RWPE1 (cell line): ENCODE measurements at regions of chr12 and their contacts with region 1.

Region 1: DNA sequence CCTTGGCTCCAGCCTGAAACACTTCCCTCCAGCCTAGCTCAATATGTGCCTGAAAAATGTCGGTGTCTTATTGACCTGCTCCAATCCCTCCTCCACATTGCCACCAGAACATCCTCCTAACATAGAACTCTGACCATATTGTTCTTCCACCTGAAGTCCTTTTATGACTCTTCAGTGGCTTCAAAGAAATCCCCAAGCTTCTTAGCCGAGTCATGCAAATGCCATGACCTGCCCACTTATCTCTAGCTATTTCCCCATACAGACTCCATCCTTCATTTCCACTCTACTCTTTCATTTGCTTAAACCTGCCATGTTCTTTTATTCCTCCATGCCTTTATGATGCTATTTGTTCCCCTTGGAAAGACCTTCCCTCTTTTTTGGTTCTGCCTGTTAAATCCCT is 568.6 kb downstream of the ETNK1 start:
- DNase-seq: no peak
- H3K27ac ChIP-seq: no peak overlapping the region
- CTCF ChIP-seq: no peak

Region 2: DNA sequence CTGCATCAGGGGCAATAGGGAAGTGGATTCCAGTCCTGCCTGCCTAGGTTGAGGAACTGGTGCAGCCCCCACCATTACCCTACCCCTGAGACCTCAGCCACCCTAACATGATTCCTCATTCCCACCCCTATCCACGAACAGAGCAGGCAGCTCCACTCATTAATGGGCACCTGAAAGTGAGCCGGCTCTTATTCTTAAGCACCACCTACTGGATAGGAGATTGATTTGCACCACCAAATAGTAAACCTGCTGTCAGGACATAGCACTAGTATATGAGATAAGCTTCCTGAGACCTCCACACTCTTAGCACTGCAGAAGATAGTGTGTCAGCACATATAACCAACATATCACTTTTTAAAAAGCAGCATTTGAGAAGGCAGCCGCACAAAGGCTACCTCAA is 182.7 kb after region 1 on chr12:
- CTCF ChIA-PET with region 1: no interaction called
- POLR2A ChIA-PET with region 1: no interaction called
- DNase-seq: no peak
- H3K27ac ChIP-seq: no peak overlapping the region
- CTCF ChIP-seq: no peak

Region 3: GRCh38 chr12:24049728-24050127 is 856.2 kb after region 1 on chr12:
- CTCF ChIA-PET with region 1: interaction called, 10 read pairs
- POLR2A ChIA-PET with region 1: no interaction called
- DNase-seq: no peak
- H3K27ac ChIP-seq: no peak overlapping the region
- CTCF ChIP-seq: no peak